Ascending aorta (tissue), 2 donors: ENCODE measurements at regions of chrX and their contacts with region 1.

Region 1: GRCh38 chrX:10579112-10580011 is 41.0 kb downstream of the MID1 start:
- DNase-seq: no peak
- H3K4me3 ChIP-seq: peak overlapping the region in 1 of 2 donors; percentile 13
- H3K27ac ChIP-seq: no peak overlapping the region
- H3K4me1 ChIP-seq: peaks cover 0 to 3% of the 10 kb centered on the region in 2 donors
- H3K27me3 ChIP-seq: no peaks in the 10 kb centered on the region
- CTCF ChIP-seq: no peak

Region 2: DNA sequence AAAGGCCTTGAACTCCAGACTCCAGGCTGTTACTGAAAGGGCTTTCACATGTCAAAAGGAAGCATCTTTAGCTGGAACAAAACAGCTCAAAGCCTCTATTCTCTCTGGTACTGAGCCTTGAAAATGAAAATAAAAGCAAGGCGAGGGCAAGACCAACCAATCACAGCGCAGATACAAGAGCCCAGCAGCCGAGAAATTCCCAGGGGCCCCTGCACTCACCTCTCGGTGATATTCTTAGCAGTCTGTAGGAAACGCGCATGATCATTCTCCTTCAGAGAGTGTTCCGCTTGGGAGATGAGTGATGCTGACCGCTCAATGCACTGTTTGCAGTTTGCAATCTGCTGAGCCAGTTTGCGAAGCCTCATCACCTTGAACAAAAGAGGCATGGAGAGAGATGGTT is 97.1 kb before region 1 on chrX:
- intact Hi-C with region 1: loop called (anchors 10 kb)
- DNase-seq: no peak
- H3K4me3 ChIP-seq: no peak overlapping the region
- H3K27ac ChIP-seq: peak overlapping the region in 1 of 2 donors; percentile 75
- H3K4me1 ChIP-seq: peaks cover 0 to 4% of the 10 kb centered on the region in 2 donors
- H3K27me3 ChIP-seq: no peaks in the 10 kb centered on the region
- CTCF ChIP-seq: no peak

Region 3: GRCh38 chrX:10512258-10512657 is 67.1 kb before region 1 on chrX:
- intact Hi-C with region 1: no loop called
- DNase-seq: no peak
- H3K4me3 ChIP-seq: no peak overlapping the region
- H3K27ac ChIP-seq: no peak overlapping the region
- H3K4me1 ChIP-seq: no peaks in the 10 kb centered on the region
- H3K27me3 ChIP-seq: no peaks in the 10 kb centered on the region
- CTCF ChIP-seq: no peak

Region 4: GRCh38 chrX:11597479-11597878 is 1018.1 kb after region 1 on chrX:
- intact Hi-C with region 1: no loop called
- DNase-seq: no peak
- H3K4me3 ChIP-seq: no peak overlapping the region
- H3K27ac ChIP-seq: no peak overlapping the region
- H3K4me1 ChIP-seq: no peaks in the 10 kb centered on the region
- H3K27me3 ChIP-seq: no peaks in the 10 kb centered on the region
- CTCF ChIP-seq: no peak